CD8-positive, alpha-beta T cell (primary cell): ENCODE measurements at regions of chr6 and their contacts with region 1.

Region 1: GRCh38 chr6:158853072-158853871 is 34.1 kb upstream of the EZR start:
- DNase-seq: peak; percentile 75 to 95 (median 88)
- ATAC-seq: peak; percentile 74
- H3K4me3 ChIP-seq: peak overlapping the region; percentile 7 to 52
- H3K4me3 Mint-ChIP-seq: no peak overlapping the region
- H3K27ac ChIP-seq: peak overlapping the region; percentile 77 to 98
- H3K27ac Mint-ChIP-seq: no peak overlapping the region
- H3K4me1 ChIP-seq: peaks cover 58% of the 10 kb centered on the region
- H3K4me1 Mint-ChIP-seq: peaks cover 44% of the 10 kb centered on the region
- H3K27me3 ChIP-seq: no peaks in the 10 kb centered on the region
- H3K27me3 Mint-ChIP-seq: no peaks in the 10 kb centered on the region
- CTCF ChIP-seq: no peak

Region 2: DNA sequence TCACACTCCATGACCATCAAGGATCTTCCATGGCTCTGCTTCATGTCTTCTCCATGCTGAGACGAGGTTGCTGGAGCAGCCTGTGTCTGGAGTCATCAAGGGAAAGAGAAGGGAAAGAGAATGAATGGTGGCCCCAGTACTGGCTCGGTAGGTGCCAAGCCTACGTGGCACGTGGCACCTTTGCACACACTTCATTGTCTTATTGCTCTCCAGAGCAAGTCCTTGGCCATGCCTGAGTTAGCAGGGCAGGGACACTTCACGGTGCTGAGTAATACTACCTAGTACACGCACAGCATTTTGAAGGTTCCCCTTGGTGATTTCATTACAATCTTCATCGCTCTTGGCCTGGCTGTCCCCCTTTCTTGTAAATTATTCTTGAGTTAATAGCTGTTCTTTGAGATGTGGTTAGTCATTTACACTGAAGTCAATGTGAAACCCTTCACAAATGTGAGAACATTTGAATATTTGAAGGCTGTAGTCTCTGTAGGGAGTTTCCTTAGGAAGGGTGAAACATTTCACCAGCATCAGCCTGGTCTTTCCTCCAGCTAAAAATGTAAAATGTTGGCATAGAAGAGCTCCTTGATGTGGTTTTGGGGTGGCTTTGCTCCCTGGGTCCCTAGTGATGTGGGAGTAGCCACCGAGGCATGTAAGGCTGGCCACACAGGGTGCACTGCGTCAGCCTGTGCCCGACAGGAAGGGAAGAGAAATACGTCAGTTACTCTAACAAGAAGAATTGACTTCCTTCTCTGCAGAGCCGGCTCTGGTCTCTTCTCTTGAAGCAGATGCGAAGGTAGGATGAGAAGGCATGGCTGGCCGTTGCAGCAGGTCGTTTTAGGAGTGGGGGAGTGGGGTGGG is 203.8 kb before region 1 on chr6 and contains the start of gene SYTL3:
- CTCF ChIA-PET with region 1: no interaction called
- POLR2A ChIA-PET with region 1: no interaction called
- intact Hi-C with region 1: loop called (anchors 5 kb)
- DNase-seq: peak; percentile 50 to 97 (median 76)
- ATAC-seq: peak; percentile 61
- H3K4me3 ChIP-seq: peak within 1 kb of the TSS in 1 of 2 experiments; percentile 43
- H3K4me3 Mint-ChIP-seq: peak within 1 kb of the TSS; percentile 77
- H3K27ac ChIP-seq: peak within 1 kb of the TSS; percentile 53 to 76
- H3K27ac Mint-ChIP-seq: peak within 1 kb of the TSS; percentile 85
- H3K4me1 ChIP-seq: peaks cover 51% of the 10 kb centered on the region
- H3K4me1 Mint-ChIP-seq: peaks cover 64% of the 10 kb centered on the region
- H3K27me3 ChIP-seq: no peaks in the 10 kb centered on the region
- H3K27me3 Mint-ChIP-seq: no peaks in the 10 kb centered on the region
- CTCF ChIP-seq: no peak
- total RNA-seq, gene SYTL3: 38.2 to 44.6 TPM

Region 3: GRCh38 chr6:158916617-158917016 is 63.3 kb after region 1 on chr6:
- CTCF ChIA-PET with region 1: interaction called, 3 read pairs
- POLR2A ChIA-PET with region 1: no interaction called
- intact Hi-C with region 1: loop called in 1 of 2 experiments (anchors 2 kb)
- DNase-seq: no peak
- ATAC-seq: no peak
- H3K4me3 ChIP-seq: no peak overlapping the region
- H3K4me3 Mint-ChIP-seq: no peak overlapping the region
- H3K27ac ChIP-seq: no peak overlapping the region
- H3K27ac Mint-ChIP-seq: no peak overlapping the region
- H3K4me1 ChIP-seq: peaks cover 27% of the 10 kb centered on the region
- H3K4me1 Mint-ChIP-seq: peaks cover 50% of the 10 kb centered on the region
- H3K27me3 ChIP-seq: no peaks in the 10 kb centered on the region
- H3K27me3 Mint-ChIP-seq: no peaks in the 10 kb centered on the region
- CTCF ChIP-seq: no peak

Region 4: DNA sequence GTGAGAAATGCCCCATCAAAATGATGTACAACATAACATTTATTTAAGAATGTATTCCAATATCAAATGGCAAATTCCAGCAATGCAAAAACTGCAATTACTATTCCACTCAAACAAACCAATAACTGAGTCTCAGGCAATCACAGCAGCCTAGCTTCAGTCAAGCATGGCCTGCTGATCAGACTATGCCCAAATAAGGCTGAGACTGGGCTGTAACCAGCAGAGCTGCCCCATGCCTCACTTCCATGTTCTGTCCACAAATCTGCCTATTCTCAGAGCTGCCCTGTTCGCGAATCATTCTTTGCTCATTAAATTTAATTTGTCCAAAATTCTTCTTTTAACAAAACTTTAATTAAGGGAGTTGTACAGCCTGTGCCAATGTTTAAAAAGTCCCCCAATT is 471.3 kb after region 1 on chr6:
- CTCF ChIA-PET with region 1: no interaction called
- POLR2A ChIA-PET with region 1: no interaction called
- intact Hi-C with region 1: no loop called
- DNase-seq: no peak
- ATAC-seq: no peak
- H3K4me3 ChIP-seq: no peak overlapping the region
- H3K4me3 Mint-ChIP-seq: no peak overlapping the region
- H3K27ac ChIP-seq: no peak overlapping the region
- H3K27ac Mint-ChIP-seq: no peak overlapping the region
- H3K4me1 ChIP-seq: no peaks in the 10 kb centered on the region
- H3K4me1 Mint-ChIP-seq: no peaks in the 10 kb centered on the region
- H3K27me3 ChIP-seq: no peaks in the 10 kb centered on the region
- H3K27me3 Mint-ChIP-seq: peaks cover 14% of the 10 kb centered on the region
- CTCF ChIP-seq: no peak